GM10248 (cell line): ENCODE measurements at regions of chr16 and their contacts with region 1.

Region 1: GRCh38 chr16:15704545-15704987 is 54.5 kb downstream of the NDE1 start:
- DNase-seq: peak; percentile 76
- CTCF ChIP-seq: peak; percentile 65

Region 2: GRCh38 chr16:15714393-15715172 is 10.0 kb after region 1 on chr16:
- CTCF ChIA-PET with region 1: interaction called, 12 read pairs
- POLR2A ChIA-PET with region 1: interaction called, 7 read pairs
- DNase-seq: no peak
- CTCF ChIP-seq: no peak

Region 3: GRCh38 chr16:15739950-15740349 is 35.4 kb after region 1 on chr16:
- CTCF ChIA-PET with region 1: no interaction called
- POLR2A ChIA-PET with region 1: no interaction called
- DNase-seq: no peak
- CTCF ChIP-seq: no peak